Mammary epithelial cell (primary cell): ENCODE measurements at regions of chr1 and their contacts with region 1.

Region 1: DNA sequence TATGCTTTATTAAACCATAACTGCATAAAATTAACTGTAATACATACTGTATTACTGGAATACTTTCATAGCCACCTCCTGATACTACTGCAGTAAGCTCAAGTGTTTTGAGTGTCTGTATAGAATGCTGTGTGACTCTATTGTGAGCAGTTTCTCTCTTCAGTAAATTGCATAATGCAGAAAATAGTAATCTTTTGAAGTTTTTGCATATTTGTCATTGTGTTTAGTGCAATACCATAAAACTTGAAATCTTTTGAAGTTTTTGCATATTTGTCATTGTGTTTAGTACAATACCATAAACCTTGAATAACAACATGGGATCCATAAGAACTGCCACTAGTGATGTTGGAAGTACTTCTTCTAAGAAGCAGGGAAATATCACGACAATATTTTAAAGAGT is 11.2 kb downstream of the TPR start:
- DNase-seq: no peak
- H3K4me3 ChIP-seq: no peak overlapping the region
- H3K27ac ChIP-seq: no peak overlapping the region
- H3K4me1 ChIP-seq: no peaks in the 10 kb centered on the region
- H3K27me3 ChIP-seq: no peaks in the 10 kb centered on the region
- CTCF ChIP-seq: no peak

Region 2: DNA sequence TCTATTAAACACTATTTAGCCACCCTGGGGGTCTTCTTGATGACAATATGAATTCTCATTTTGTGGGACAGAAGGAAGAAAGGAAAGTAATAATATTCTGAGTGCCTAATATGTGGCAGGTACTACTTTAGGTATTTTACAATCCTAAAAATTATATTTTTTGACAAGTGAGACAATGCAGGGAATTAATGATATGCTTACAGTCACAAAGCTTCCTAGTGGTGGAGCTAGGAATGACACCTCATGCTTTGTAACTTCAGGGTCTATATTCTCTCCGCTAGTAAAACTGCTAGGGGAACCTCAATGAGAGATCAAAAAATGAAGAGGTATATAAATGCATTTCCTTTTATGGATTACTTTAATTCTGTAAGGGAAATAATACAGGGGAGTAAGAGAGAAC is 33.1 kb before region 1 on chr1:
- CTCF ChIA-PET with region 1: no interaction called
- dilution Hi-C with region 1: no loop called
- in situ Hi-C with region 1: no loop called
- intact Hi-C with region 1: loop called (anchors 2 kb)
- DNase-seq: no peak
- H3K4me3 ChIP-seq: no peak overlapping the region
- H3K27ac ChIP-seq: no peak overlapping the region
- H3K4me1 ChIP-seq: no peaks in the 10 kb centered on the region
- H3K27me3 ChIP-seq: no peaks in the 10 kb centered on the region
- CTCF ChIP-seq: peak; percentile 30 to 34